AG04449 (cell line): ENCODE measurements at regions of chr22 and their contacts with region 1.

Region 1: GRCh38 chr22:32796865-32797573 is 4.5 kb upstream of the TIMP3 start:
- DNase-seq: no peak
- H3K4me3 ChIP-seq: peak overlapping the region; percentile 27
- CTCF ChIP-seq: peak; percentile 97

Region 2: DNA sequence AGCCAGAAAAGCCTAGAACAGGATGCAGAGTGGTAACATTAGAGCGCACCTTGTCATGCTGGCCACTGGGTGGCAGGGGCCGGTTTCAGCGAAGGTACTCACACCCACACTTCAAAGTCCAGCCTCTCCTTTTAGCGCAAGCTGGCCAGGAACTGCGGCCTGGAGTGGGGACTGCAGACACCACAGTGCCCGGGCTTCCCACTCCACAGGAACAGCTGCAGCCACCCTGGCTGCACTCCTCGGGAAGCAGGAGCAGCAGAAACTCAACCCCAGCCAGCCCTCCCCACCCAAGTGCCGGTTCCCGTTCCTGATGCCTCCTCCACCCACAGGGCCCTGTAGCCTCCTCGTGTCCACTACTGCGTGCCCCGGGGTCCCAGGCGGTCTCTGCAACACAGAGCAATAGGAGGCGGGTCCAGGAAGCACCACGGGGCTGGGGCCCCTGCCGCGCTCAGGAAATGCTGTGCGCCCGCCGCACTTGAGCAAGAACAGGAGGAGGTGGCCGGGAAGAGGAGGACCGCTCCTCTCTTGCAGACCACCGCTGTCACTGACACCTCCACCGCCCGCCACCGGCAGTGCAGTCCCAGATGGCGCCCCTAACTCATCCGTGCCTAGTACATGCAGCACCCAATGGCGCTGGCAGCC is 594.4 kb before region 1 on chr22:
- CTCF ChIA-PET with region 1: no interaction called
- POLR2A ChIA-PET with region 1: no interaction called
- DNase-seq: no peak
- H3K4me3 ChIP-seq: no peak overlapping the region
- CTCF ChIP-seq: peak; percentile 60

Region 3: GRCh38 chr22:32528984-32529982 is 267.7 kb before region 1 on chr22:
- CTCF ChIA-PET with region 1: interaction called, 501 read pairs
- POLR2A ChIA-PET with region 1: interaction called, 96 read pairs
- DNase-seq: peak; percentile 45
- H3K4me3 ChIP-seq: no peak overlapping the region
- CTCF ChIP-seq: peak; percentile 89

Region 4: GRCh38 chr22:32628628-32629572 is 168.1 kb before region 1 on chr22:
- CTCF ChIA-PET with region 1: interaction called, 56 read pairs
- POLR2A ChIA-PET with region 1: interaction called, 10 read pairs
- DNase-seq: peak; percentile 76
- H3K4me3 ChIP-seq: no peak overlapping the region
- CTCF ChIP-seq: no peak

Region 5: GRCh38 chr22:32665676-32666075 is 131.3 kb before region 1 on chr22:
- CTCF ChIA-PET with region 1: interaction called, 578 read pairs
- POLR2A ChIA-PET with region 1: interaction called, 60 read pairs
- DNase-seq: no peak
- H3K4me3 ChIP-seq: no peak overlapping the region
- CTCF ChIP-seq: no peak

Region 6: DNA sequence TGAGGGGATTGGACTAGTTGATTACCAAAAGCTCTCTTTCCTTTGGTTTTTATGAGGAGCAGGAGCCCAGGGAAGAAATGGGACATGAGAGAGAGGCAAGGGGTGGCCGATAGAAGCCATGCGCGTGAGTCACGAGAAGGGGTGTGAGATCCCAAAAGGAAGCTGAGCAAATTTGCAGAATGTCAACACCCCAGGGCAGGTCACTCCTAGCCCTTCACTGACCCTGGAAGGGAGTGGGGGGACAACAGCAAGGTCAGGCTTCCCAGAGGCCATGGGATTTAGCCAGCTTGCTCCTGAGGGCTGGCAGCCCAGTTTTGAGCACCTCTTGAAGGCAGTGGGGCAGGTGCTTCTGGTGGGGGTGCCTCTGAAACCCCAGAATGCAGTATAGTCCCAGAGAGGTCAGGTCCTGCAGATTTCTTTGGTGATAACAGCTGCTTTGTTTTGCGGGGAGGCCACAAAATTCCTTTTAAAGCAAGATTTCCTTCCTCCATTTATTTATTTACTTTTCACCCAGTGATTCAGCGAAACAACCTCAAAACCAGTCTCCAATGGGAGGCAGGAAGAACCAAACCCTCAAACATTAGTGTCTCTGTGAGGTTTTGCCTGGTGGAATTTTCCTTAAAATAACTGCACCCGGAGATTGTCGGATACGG is 35.6 kb before region 1 on chr22:
- CTCF ChIA-PET with region 1: interaction called, 13 read pairs
- POLR2A ChIA-PET with region 1: no interaction called
- DNase-seq: no peak
- H3K4me3 ChIP-seq: no peak overlapping the region
- CTCF ChIP-seq: no peak

Region 7: DNA sequence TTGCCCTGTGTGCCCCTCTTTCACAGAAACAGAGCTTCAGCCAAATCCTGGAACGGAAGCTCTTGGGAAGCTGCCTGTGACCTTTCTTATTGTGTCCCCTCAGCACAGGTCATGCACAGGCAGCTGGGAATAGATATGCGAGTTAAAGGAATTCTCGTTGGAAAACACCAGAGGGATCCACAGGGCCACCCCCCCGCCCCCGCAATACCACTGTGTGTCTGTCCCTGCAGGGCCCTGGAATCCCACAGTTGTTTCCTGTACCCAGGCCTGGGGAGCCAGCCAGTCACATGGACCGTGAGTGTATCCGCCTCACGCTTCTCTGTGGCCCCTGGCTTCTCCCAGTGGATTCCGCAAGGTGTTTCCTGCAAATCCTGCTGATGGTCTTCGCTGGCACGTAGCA is 33.5 kb after region 1 on chr22:
- CTCF ChIA-PET with region 1: interaction called, 24 read pairs
- POLR2A ChIA-PET with region 1: interaction called, 6 read pairs
- DNase-seq: no peak
- H3K4me3 ChIP-seq: no peak overlapping the region
- CTCF ChIP-seq: no peak

Region 8: GRCh38 chr22:33076343-33076742 is 279.3 kb after region 1 on chr22:
- CTCF ChIA-PET with region 1: no interaction called
- POLR2A ChIA-PET with region 1: no interaction called
- DNase-seq: no peak
- H3K4me3 ChIP-seq: no peak overlapping the region
- CTCF ChIP-seq: no peak